ENCODE measurements at regions of chr6 and their contacts with region 1.

Region 1: GRCh38 chr6:39980839-39981580 is 46.7 kb upstream of the MOCS1 start:
- DNase-seq: no peak
- ATAC-seq: peak; percentile 79 to 81

Region 2: GRCh38 chr6:39922821-39923220 is 58.2 kb before region 1 on chr6:
- intact Hi-C with region 1: no loop called
- DNase-seq: no peak
- ATAC-seq: no peak

Region 3: DNA sequence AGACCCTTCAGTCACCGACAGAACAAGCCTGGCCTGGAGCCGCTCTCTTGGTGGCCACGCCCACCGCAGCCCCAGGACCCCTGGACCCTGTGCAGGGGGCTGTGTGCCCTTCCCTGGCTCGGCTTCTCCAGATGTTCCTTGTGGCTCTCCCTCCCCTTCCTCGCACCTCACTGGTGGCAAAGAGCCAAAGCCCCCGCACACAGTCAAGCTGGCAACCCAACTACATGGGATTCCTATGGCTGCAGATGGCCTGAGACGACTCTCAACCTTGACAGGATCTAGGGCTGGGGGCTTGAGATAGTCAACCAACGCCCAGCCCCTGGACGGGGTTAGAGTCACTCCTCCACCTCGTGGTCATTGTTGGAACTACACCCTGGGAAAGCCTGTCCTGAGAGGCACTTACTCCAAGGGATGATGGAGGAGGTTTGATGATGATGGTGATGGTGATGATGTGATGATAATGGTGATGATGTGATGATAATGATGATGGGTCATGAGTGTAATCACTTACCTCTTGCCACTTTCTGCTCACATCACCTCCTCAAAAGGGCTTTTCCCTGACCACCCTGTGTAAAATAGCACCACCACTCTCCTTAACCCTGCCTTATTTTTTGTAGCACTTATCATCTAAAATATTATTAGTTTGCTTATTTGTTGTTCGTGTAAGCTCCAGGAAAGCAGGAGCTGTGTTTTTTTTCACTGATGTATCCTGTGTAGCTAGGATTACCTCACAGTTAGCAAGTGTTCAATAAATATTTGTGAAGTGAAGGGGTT is 327.7 kb after region 1 on chr6:
- intact Hi-C with region 1: loop called (anchors 2 to 5 kb)
- DNase-seq: peak; percentile 61
- ATAC-seq: peak; percentile 75 to 81

Region 4: GRCh38 chr6:40472353-40472752 is 491.3 kb after region 1 on chr6:
- intact Hi-C with region 1: no loop called
- DNase-seq: no peak
- ATAC-seq: no peak

Region 5: DNA sequence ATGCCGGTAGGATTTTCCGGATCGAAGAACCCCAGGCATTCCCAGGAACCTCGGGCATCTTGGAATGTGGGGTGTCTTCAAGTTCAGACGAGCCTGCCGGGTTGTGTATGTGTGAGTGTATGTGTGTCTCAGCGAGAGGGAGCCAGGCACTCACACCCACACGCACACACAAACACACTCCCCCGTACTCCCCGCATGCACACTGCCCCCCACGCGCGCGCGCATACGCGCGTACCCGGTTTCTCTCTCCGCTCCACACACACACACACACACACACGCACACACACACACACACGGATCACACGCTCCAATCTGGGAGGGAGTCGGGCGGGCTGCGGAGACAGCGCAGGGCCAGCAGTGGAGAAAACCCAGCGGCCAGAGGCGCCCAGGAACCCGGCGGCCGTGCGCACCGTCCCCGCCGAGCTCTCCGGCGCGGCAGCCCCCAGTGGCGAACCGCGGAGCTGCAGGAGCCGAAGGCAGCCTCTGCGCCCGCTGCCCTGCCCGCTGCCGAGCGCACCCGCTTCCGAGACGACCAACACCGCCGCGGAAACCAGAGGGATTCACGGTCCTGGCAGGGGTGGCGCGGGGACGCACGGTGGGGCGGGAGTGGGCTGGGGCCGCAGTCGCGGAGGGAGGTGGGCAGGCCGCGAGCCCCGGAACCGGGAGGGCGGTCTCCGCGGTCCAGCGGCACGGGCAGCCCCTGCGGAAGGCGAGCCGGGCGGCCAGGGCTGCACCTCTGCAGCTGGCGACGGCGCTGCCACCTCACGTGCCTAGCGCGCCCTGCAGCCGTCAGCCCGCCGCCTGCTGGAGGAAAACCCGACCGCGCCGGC is 606.4 kb after region 1 on chr6 and contains the start of gene LRFN2:
- intact Hi-C with region 1: loop called in 1 of 2 experiments (anchors 10 kb)
- DNase-seq: peak; percentile 66
- ATAC-seq: peak; percentile 95 to 96
- total RNA-seq, gene LRFN2: not detected

Region 6: GRCh38 chr6:40845553-40845952 is 864.5 kb after region 1 on chr6:
- intact Hi-C with region 1: loop called in 1 of 2 experiments (anchors 10 kb)
- DNase-seq: peak; percentile 35
- ATAC-seq: no peak

Region 7: GRCh38 chr6:41027799-41028628 is 1047.0 kb after region 1 on chr6:
- intact Hi-C with region 1: loop called in 1 of 2 experiments (anchors 10 kb)
- DNase-seq: peak; percentile 90
- ATAC-seq: peak; percentile 96 to 97